ENCODE measurements at regions of chr1 and their contacts with region 1.

Region 1: GRCh38 chr1:234875953-234876855 is 252.4 kb downstream of the TOMM20 start:
- DNase-seq: peak; percentile 59 to 89 (median 77)
- ATAC-seq: peak; percentile 66 to 74 (median 70)
- H3K4me3 ChIP-seq: peak overlapping the region in 1 of 3 donors; percentile 12
- H3K27ac ChIP-seq: peak overlapping the region; percentile 92 to 100 (median 93)
- H3K4me1 ChIP-seq: peaks cover 0 to 53% (median 19%) of the 10 kb centered on the region in 4 donors
- H3K27me3 ChIP-seq: no peaks in the 10 kb centered on the region
- CTCF ChIP-seq: no peak
- POLR2A ChIP-seq: no peak

Region 2: DNA sequence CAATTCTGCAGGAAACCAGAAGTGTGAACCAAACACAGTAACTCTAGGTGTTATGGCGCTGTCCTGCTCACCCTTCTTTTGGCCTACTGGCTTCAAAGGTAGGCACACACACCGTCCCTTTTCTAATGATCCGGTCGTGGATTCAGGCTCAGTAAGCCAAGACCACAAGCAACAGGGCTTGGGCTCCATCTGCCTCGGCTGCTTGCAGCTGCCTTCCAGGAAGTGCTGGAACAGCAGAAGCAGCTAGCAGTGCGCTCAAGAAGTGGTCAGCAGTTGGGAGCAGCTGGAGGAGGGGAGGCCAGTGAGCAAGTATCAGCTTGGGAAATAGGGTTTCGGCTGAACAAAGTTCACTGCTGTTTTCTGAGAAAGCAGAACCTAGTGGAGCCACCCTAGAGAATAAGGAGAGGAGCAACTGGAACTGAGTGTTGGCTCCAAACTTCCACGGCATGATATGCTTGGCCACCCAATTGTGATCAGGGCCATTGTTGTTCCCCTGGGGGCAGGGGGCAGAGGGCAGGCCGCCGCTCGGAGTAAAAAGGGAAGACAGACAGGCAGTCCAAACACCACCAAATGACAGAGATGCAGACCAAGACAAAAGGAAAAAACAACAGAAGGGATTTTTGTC is 79.0 kb after region 1 on chr1:
- intact Hi-C with region 1: loop called (anchors 5 kb)
- DNase-seq: peak; percentile 76 to 85 (median 81)
- ATAC-seq: peak; percentile 52 to 74 (median 57)
- H3K4me3 ChIP-seq: no peak overlapping the region
- H3K27ac ChIP-seq: peak overlapping the region; percentile 88 to 99 (median 95)
- H3K4me1 ChIP-seq: peaks cover 0 to 64% (median 31%) of the 10 kb centered on the region in 4 donors
- H3K27me3 ChIP-seq: no peaks in the 10 kb centered on the region
- CTCF ChIP-seq: no peak
- POLR2A ChIP-seq: peak; percentile 40

Region 3: DNA sequence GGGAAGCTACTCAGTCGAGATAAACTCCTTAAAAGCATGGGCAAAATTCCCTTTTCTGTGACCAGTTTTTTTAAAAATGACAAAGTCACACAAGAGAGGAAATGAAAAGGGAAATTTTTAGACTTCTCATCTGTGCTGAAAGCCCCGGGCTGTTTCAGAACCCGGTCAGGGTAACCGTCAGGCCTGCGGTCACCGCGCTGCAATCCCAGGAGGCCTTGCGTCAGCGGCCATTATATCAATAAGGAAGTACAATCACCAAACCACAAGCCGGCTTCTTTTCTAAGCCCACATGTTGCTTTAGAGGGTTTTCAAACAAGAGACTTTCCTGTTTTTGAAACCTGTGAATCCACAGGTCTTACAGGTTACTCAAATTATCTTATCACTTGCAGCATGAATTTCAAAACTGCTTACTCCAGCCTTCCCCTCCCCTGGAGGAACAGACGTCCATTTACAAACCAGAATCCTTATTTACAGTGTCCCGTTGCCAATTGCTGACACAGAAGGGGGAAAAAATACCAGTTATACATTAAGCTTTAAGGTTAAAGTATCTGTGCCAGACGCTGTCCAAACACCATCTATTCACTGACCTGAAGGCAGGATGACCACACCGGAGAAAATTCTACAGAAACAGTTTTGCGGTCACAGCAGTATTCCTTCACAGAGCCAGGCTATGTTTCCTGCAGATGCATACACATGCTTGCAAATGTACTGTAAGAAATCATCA is 87.1 kb after region 1 on chr1:
- intact Hi-C with region 1: loop called (anchors 5 kb)
- DNase-seq: peak; percentile 81 to 88 (median 86)
- ATAC-seq: peak; percentile 5 to 44 (median 24)
- H3K4me3 ChIP-seq: no peak overlapping the region
- H3K27ac ChIP-seq: peak overlapping the region; percentile 88 to 99 (median 95)
- H3K4me1 ChIP-seq: peaks cover 0 to 76% (median 40%) of the 10 kb centered on the region in 4 donors
- H3K27me3 ChIP-seq: no peaks in the 10 kb centered on the region
- CTCF ChIP-seq: no peak
- POLR2A ChIP-seq: peak; percentile 23